H1 (cell line): ENCODE measurements at regions of chr7 and their contacts with region 1.

Region 1: GRCh38 chr7:154913638-154914312 is 89.1 kb downstream of the PAXIP1 start:
- DNase-seq: peak; percentile 79 to 99
- H3K4me3 ChIP-seq: peak overlapping the region in 3 of 4 experiments; percentile 22 to 48 (median 40); a peak in 4 of 8 replicates
- H3K27ac ChIP-seq: no peak overlapping the region
- H3K4me1 ChIP-seq: peaks cover 0 to 2% (median 0%) of the 10 kb centered on the region in 4 experiments; a peak in 4 of 7 replicates
- H3K27me3 ChIP-seq: peaks cover 0 to 9% (median 7%) of the 10 kb centered on the region in 4 experiments; a peak in 5 of 7 replicates
- CTCF ChIP-seq: peak; percentile 75 to 93 (median 89)
- EP300 ChIP-seq: no peak
- POLR2A ChIP-seq: no peak
- RAD21 ChIP-seq: peak; percentile 88 to 95

Region 2: GRCh38 chr7:154646126-154647013 is 267.4 kb before region 1 on chr7:
- CTCF ChIA-PET with region 1: no interaction called
- POLR2A ChIA-PET with region 1: no interaction called
- DNase-seq: no peak
- H3K4me3 ChIP-seq: no peak overlapping the region
- H3K27ac ChIP-seq: no peak overlapping the region
- H3K4me1 ChIP-seq: no peaks in the 10 kb centered on the region
- H3K27me3 ChIP-seq: no peaks in the 10 kb centered on the region
- CTCF ChIP-seq: no peak
- EP300 ChIP-seq: no peak
- POLR2A ChIP-seq: no peak
- RAD21 ChIP-seq: no peak

Region 3: DNA sequence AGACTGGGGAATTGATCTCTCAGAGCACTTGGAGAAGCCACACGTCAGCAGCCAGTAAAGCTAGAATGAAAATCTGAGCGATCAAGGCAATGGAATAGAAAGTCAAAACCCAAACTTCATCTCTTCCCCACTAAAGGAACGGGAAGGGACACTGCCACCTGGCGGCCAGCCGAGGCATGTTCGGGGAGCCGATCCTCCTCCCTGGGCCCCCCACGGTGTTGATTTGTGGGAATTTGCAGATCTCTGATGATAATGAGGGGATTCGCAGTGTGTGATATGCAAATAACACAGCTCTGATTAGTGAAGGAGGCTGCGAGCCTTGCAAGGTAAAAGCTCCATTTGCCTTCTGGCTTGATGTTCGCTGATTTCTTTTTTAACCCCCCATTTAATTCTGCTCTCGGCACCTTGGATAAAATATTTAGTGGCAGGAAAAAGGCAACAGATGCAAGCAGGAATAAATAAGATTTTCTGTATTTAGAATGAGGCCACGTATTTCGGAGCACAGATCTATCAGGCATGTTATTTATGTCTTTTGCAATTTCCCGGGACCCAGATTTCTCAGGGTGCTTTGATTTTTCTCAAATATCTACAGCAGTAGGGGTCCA is 169.4 kb before region 1 on chr7:
- CTCF ChIA-PET with region 1: no interaction called
- POLR2A ChIA-PET with region 1: no interaction called
- DNase-seq: peak; percentile 23 to 95
- H3K4me3 ChIP-seq: no peak overlapping the region
- H3K27ac ChIP-seq: no peak overlapping the region
- H3K4me1 ChIP-seq: peaks cover 0 to 5% (median 3%) of the 10 kb centered on the region in 4 experiments; a peak in 4 of 7 replicates
- H3K27me3 ChIP-seq: no peaks in the 10 kb centered on the region
- CTCF ChIP-seq: peak; percentile 85 to 95 (median 95)
- EP300 ChIP-seq: no peak
- POLR2A ChIP-seq: no peak
- RAD21 ChIP-seq: peak; percentile 70 to 78

Region 4: DNA sequence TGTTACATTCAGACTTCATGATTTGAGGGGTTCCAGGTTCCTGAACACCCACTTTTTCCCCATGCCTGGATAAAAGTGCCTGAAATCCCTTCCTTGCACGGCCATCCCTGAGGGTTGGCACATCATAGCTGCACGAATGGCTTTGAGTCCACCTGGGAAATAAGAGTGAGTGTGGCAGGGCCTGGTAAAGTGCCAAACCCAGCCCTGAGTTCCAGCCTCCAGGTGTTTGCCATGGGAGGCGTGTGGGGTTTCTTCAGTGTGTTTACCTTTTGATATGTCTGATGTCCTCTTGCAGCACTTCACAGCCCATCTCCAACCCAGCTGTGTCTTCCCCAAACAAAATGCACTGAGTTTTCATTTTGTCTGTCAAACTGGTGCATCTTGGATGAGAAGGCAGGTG is 56.5 kb before region 1 on chr7:
- CTCF ChIA-PET with region 1: interaction called, 12 read pairs
- POLR2A ChIA-PET with region 1: no interaction called
- DNase-seq: no peak
- H3K4me3 ChIP-seq: no peak overlapping the region
- H3K27ac ChIP-seq: no peak overlapping the region
- H3K4me1 ChIP-seq: no peaks in the 10 kb centered on the region
- H3K27me3 ChIP-seq: no peaks in the 10 kb centered on the region; a peak in 1 of 7 replicates
- CTCF ChIP-seq: no peak
- EP300 ChIP-seq: no peak
- POLR2A ChIP-seq: no peak
- RAD21 ChIP-seq: no peak

Region 5: DNA sequence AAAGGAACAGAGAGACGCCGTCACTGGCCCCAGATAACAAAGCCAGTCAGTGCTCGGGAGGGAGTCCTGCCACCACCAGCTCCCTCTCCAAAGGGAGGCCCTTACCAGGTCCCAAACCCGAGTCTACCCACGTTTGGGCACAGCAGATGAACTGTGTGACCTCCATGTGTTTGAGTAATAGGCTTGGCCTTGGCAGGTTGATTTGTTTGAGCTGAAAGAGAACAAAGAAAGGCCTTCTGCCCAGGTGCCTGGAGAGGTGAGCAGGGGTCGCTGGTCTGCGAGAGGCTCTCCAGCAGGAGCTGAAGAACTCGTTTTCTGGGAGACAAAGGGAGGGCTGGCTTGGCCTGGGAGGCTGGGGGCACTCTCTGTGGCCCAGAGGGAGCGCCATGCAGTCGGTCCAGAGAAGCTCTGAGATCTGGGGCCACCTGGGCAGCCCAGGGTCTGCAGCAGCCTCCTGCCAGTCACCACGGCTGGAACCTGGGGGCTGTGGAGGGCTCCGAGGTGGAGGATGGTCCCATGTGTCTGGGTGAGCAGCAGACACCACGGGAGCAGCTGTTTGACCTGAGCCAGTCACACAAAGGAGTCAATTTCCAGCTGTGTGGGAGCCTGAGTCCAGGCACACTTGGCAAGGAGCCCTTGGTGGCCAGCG is 10.6 kb before region 1 on chr7:
- CTCF ChIA-PET with region 1: interaction called, 69 read pairs
- POLR2A ChIA-PET with region 1: no interaction called
- DNase-seq: no peak
- H3K4me3 ChIP-seq: no peak overlapping the region
- H3K27ac ChIP-seq: no peak overlapping the region
- H3K4me1 ChIP-seq: no peaks in the 10 kb centered on the region
- H3K27me3 ChIP-seq: no peaks in the 10 kb centered on the region
- CTCF ChIP-seq: no peak
- EP300 ChIP-seq: no peak
- POLR2A ChIP-seq: no peak
- RAD21 ChIP-seq: no peak

Region 6: DNA sequence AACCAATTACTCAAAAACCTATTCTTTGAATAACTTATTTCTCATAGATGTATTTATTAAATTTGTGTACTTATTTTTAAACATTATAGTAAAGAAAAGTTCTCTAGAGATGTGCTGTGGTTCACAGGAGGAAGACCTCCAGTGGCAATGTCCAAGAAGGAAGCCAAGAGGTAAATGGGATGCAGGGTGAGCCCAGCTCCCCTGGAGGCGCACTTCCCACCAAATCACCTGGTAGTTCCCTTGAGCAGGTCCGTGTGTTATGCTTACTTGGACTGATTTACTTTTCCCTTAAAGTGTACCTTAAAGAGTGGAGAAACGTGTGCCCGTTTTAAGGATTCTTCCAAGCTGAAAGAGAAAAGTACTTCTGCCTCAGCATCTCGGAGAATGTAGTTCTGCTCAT is 33.8 kb after region 1 on chr7:
- CTCF ChIA-PET with region 1: interaction called, 38 read pairs
- POLR2A ChIA-PET with region 1: no interaction called
- DNase-seq: no peak
- H3K4me3 ChIP-seq: no peak overlapping the region
- H3K27ac ChIP-seq: no peak overlapping the region
- H3K4me1 ChIP-seq: no peaks in the 10 kb centered on the region
- H3K27me3 ChIP-seq: no peaks in the 10 kb centered on the region
- CTCF ChIP-seq: peak; percentile 18 to 64 (median 45); a peak in 3 of 4 replicates
- EP300 ChIP-seq: no peak
- POLR2A ChIP-seq: no peak
- RAD21 ChIP-seq: peak in 1 of 2 experiments; percentile 9; a peak in 1 of 4 replicates

Region 7: DNA sequence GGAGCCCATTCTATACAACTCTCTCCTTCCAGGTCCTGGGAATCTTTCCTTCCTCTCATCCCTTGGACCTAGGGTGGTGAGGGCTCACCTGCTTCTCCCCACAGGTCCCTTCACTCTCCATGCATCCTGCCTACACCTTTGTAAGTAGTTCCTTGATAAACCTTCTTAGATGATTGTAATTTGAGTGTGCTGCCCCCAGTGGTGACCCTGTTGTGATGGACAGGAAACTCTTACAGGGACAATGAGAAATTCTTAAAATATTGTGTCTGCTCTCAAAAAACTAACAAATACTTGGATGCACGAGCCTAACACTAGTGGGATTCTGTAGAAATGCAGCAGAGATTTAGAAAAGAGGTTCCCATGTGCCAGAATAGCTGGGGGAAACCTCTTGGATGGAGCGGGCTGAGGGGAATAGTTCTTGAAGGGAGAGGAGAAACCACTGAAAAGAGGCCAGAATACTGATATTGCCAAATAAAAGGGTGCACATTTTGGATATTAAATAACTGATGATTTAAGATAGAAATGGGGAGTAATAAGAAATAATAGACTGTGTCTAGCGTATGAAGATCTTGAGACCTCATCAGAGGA is 95.9 kb after region 1 on chr7:
- CTCF ChIA-PET with region 1: interaction called, 14 read pairs
- POLR2A ChIA-PET with region 1: no interaction called
- DNase-seq: no peak
- H3K4me3 ChIP-seq: no peak overlapping the region
- H3K27ac ChIP-seq: no peak overlapping the region
- H3K4me1 ChIP-seq: no peaks in the 10 kb centered on the region
- H3K27me3 ChIP-seq: no peaks in the 10 kb centered on the region
- CTCF ChIP-seq: peak in 2 of 3 experiments; percentile 29 to 54; a peak in 2 of 4 replicates
- EP300 ChIP-seq: no peak
- POLR2A ChIP-seq: no peak
- RAD21 ChIP-seq: no peak; a peak in 1 of 4 replicates

Region 8: DNA sequence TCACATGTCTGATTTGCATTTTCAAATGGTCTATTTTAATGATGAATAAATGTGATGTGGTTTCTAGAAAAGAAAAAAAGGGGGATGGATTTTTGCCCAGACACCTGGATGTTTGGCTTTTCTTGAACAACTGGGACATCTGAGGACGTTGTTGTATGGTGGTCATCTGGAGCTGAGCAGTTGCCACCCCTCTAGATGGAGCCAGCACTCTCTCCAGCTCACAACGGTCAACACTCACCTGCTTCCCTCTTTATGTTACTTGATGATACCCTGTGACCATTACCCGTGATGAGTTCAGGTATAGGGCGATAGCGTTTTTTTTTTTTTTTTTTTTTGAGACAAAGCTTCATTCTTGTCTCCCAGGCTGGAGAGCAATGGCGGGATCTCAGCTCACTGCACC is 119.2 kb after region 1 on chr7:
- CTCF ChIA-PET with region 1: no interaction called
- POLR2A ChIA-PET with region 1: no interaction called
- DNase-seq: no peak
- H3K4me3 ChIP-seq: no peak overlapping the region
- H3K27ac ChIP-seq: no peak overlapping the region
- H3K4me1 ChIP-seq: no peaks in the 10 kb centered on the region
- H3K27me3 ChIP-seq: no peaks in the 10 kb centered on the region
- CTCF ChIP-seq: peak in 2 of 3 experiments; percentile 12 to 20; a peak in 2 of 4 replicates
- EP300 ChIP-seq: no peak
- POLR2A ChIP-seq: no peak
- RAD21 ChIP-seq: peak; percentile 42 to 52